HEK293 (cell line): ENCODE measurements at regions of chr7 and their contacts with region 1.

Region 1: DNA sequence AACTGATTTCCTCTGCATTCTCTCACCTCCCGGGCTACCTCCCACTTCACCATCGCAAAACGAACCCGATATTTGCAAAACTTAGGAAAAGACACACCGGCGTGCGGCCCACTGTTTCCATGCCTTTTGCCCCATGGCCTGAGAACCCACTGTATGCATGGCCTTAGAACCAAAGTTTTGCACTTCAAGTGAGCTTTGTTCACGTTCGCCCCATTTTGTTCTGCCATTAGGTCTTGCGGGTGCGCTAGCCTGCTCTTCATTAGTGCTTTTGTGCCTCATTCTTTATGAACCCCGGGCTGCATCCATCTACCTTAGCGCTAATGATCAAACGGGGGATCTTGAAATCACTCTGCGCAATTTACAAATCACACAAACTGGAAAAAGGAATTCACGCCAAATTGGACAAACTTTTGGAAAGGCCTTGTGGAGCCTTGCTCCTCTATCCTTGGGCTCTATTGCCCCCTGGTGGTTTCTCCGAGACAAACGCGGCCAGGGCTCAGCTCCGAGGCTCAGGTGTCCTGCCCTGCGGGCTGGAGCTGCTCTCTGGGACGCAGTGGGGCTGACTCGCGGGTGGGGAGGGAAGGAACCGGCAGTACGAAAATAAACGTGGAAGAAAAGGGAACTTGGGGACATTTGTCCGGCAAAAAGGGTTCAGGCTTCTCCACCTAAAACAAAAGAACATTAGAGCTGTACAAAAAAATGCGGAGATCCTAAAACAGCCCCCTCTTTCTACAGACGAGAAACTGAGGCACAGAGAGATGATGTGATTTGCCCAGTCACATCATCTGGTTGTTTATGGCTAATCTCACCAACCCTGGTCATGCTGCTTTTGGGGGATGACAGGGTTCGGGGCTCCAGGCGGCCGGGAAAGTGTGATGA is 300.4 kb upstream of the NFE2L3 start:
- H3K4me3 ChIP-seq: no peak overlapping the region
- H3K27ac ChIP-seq: no peak overlapping the region
- H3K4me1 ChIP-seq: peaks cover 16% of the 10 kb centered on the region
- CTCF ChIP-seq: peak; percentile 65

Region 2: GRCh38 chr7:25389489-25390106 is 462.0 kb before region 1 on chr7:
- CTCF ChIA-PET with region 1: interaction called, 116 read pairs
- POLR2A ChIA-PET with region 1: no interaction called
- H3K4me3 ChIP-seq: no peak overlapping the region
- H3K27ac ChIP-seq: no peak overlapping the region
- H3K4me1 ChIP-seq: peaks cover 2% of the 10 kb centered on the region; the same call in 1 of the 2 replicates
- CTCF ChIP-seq: peak; percentile 28; the same call in 1 of the 2 replicates

Region 3: DNA sequence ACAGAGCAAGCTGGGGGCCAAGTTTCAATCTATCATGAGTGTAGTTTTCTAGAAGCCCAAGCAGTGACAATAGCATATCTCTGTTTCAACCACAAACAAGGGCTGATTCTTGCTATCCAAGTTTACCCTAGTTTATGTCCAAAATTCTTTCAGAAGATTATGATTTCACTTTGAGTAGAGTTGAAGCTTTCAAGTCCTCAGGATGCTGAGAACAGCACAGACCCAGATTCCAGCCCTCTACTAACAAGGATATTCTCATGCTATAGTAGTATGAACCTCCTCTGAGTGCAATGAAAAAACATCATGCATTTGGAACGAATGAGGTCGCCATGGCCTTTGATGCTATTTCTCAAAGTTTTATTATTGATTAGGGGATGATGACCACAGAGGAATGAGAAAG is 279.1 kb before region 1 on chr7:
- CTCF ChIA-PET with region 1: interaction called, 103 read pairs
- POLR2A ChIA-PET with region 1: interaction called, 3 read pairs
- H3K4me3 ChIP-seq: no peak overlapping the region
- H3K27ac ChIP-seq: no peak overlapping the region
- H3K4me1 ChIP-seq: no peaks in the 10 kb centered on the region
- CTCF ChIP-seq: no peak

Region 4: GRCh38 chr7:25765110-25765655 is 86.4 kb before region 1 on chr7:
- CTCF ChIA-PET with region 1: no interaction called
- POLR2A ChIA-PET with region 1: no interaction called
- H3K4me3 ChIP-seq: no peak overlapping the region
- H3K27ac ChIP-seq: no peak overlapping the region
- H3K4me1 ChIP-seq: no peaks in the 10 kb centered on the region
- CTCF ChIP-seq: no peak

Region 5: GRCh38 chr7:25839084-25839769 is 12.3 kb before region 1 on chr7:
- CTCF ChIA-PET with region 1: interaction called, 27 read pairs
- POLR2A ChIA-PET with region 1: no interaction called
- H3K4me3 ChIP-seq: no peak overlapping the region
- H3K27ac ChIP-seq: no peak overlapping the region
- H3K4me1 ChIP-seq: no peaks in the 10 kb centered on the region
- CTCF ChIP-seq: no peak

Region 6: GRCh38 chr7:27172823-27173510 is 1321.4 kb after region 1 on chr7:
- CTCF ChIA-PET with region 1: interaction called, 5 read pairs
- POLR2A ChIA-PET with region 1: interaction called, 28 read pairs
- H3K4me3 ChIP-seq: peak overlapping the region; percentile 76
- H3K27ac ChIP-seq: peak overlapping the region; percentile 100
- H3K4me1 ChIP-seq: peaks cover 10% of the 10 kb centered on the region
- CTCF ChIP-seq: no peak